ENCODE measurements at regions of chr17 and their contacts with region 1.

Region 1: GRCh38 chr17:77429919-77430752 is 289.4 kb downstream of the SEC14L1 start:
- DNase-seq: peak; percentile 94

Region 2: GRCh38 chr17:77319211-77320043 is 110.7 kb before region 1 on chr17:
- intact Hi-C with region 1: no loop called
- DNase-seq: peak; percentile 93

Region 3: DNA sequence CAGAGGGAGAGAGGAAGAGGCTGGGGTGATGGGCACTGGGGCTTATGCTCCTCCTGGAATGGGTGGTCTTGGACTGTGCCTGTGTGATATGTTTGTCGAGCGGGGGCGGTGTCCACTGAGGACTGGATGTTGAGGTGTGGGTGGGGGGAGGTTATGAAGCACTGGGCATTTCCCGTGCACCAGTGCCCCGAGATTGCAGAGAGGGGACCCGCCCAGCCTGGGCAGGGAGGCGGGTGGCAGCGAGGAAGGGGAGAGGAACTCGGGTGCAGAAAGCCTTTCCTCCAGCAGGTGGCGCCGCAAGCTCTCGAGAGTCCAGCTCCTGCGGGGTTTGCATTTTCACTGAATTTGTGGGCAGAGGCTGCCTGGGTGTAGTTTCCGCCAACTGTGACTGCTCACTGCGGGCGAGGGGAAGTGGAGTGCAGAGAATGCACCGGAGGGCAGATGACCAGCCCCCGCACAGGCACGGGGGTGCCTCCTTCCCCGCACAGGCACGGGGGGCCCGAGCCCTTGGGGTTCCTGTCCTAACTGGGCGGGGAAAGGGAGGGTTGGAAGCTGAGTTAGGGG is 98.8 kb before region 1 on chr17:
- intact Hi-C with region 1: loop called (anchors 2 kb)
- DNase-seq: peak; percentile 96

Region 4: GRCh38 chr17:77391668-77392375 is 38.3 kb before region 1 on chr17:
- intact Hi-C with region 1: loop called (anchors 5 kb)
- DNase-seq: no peak

Region 5: DNA sequence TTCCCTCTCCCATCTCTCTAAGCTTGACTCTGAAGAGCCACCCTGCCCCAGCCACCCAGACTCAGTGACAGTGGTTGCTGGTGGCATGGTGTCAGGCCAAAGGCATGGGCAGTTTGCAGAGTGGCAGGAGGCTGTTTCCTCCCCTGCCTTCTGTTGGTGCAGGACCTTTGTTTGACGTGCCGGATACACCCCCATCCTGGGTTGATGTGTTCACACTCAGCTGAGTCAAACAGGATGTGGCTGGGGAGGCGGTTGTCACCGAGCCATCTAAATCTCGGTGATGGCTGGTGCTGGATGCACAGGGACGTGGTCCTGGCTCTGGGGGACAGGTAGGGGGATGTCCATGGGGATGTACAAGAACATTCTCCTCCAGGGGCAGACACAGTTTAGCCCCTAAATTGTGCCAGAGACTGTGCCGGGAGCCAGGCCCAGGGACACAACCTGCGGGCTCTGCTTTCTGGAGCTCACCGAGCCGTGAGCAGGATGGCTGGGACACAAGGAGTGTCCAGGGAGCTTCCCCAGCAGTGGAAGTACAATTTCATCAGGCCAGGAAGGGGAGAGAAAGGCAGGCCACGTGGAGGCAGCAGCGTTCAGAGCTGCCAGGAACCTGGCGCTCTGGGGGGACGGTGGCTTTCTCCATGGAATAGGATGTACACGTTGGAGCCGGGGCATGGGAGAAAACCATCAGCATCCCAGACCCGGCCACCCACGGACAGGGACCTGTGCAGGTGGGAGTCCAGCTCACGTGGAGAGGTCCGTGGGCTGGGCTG is 25.1 kb before region 1 on chr17:
- intact Hi-C with region 1: loop called (anchors 2 kb)
- DNase-seq: peak; percentile 91

Region 6: GRCh38 chr17:77471984-77472461 is 41.9 kb after region 1 on chr17:
- intact Hi-C with region 1: loop called (anchors 2 kb)
- DNase-seq: no peak

Region 7: DNA sequence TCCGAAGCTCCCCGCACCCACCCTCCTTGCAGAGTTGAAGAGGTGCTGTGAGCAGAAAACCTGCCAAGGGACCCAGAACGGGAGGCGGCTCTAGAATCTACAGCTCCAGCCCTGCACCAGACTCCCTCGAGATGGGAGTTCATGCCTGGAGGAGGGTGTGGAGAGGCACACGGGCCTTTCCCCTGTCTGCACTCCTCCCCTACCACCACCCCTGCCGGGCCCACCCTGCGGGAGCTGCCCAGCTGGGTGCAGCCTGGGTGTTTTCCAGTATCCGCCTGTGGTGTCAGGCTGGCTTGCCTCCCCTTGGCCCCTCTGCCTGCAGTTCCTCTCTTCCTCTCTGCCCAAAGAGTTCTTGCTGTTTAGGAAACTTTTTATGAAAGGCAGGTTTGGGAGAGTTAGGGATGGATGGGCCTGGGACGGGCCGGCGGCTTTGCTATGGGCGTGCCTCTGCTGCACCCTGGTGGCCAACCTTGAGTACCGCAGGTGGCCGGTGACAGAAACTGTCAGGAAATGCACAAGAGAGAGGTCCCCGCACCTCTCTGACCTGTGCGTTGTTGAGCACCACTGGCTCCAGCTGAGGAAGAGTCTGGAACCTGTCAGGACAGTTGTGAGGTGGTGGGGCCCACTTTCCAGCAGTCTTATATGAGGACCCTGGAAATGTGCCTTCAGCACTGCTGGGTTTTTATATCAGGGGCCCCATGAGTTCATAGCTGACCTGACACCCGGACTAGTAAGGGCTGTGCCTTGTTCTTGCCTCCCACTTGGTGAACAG is 64.7 kb after region 1 on chr17:
- intact Hi-C with region 1: loop called (anchors 1 kb)
- DNase-seq: peak; percentile 90

Region 8: DNA sequence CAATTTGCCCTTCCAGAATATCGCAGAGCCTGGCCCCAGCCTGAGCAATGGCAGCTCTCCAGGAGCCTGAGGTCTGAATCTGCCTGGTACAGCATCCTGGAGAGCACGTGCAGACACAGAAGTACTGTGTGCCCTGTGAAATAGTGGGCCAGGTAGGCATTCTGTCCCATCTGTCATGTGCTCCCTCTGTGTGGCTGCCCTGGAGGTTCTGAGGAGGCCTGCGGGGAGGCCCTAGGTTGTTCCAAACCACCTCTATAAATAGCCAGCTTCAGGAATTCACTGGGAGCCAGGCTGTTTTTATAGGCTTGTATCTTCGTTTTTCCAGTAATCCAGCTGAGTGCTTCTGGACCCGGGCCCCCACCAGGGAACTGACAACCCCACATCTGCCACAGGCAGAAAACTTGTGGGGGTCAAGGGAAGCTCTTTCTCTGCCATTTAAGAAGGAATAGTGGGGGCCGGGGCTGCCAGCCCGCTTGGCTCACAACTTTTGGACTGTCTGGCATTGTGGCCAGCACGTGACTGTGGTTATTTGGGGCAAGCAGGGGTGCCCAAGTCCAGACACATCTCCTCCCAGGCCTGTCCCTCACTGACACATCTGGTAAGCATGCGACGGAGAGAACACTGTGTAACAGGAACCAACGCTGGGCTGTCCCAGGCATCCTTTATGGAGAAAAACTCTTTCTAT is 172.1 kb after region 1 on chr17:
- intact Hi-C with region 1: loop called (anchors 5 kb)
- DNase-seq: peak; percentile 89

Measured in cardiac septum (tissue), 1 donor.